Caco-2 (cell line): ENCODE measurements at regions of chr14 and their contacts with region 1.

Region 1: DNA sequence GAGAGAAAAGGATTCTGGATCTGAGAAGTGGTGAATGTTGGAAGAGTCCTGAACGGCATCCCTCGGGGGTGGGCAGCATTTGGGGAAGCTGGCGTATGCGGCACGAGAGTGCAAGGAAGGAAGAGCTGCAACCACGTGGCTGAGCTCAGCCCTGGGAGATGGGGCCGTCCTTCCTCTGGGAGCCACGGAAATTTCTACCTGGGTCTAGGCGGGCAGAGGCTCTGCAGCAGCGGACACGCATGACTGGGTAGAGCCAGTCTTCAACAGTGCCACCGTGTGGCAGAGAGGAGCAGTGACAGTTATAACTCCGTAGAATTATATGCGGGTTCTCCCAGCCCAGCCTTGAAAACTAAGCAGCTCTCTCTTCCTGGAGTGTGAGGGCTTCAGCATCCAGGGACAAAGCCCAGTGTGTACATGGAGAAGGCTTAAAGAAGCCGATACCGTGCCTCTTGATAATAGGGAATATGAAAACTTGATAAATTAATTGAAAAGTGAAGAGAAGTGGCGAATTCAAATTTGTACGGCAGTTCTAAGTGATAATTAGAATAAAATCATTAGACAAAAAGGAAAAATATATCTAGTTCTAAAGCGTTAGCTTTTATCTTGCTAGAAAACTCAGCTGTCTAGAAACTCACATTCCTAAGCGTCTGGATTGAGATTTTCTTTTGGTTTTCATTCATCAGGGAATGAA is 82.9 kb upstream of the STXBP6 start:
- DNase-seq: peak; percentile 81 to 84
- H3K4me3 ChIP-seq: peak overlapping the region; percentile 25; the same call in 1 of the 2 replicates
- H3K4me3 Mint-ChIP-seq: peak overlapping the region; percentile 72
- H3K27ac Mint-ChIP-seq: peak overlapping the region; percentile 31
- H3K4me1 ChIP-seq: no peaks in the 10 kb centered on the region
- H3K4me1 Mint-ChIP-seq: peaks cover 7% of the 10 kb centered on the region
- H3K27me3 ChIP-seq: no peaks in the 10 kb centered on the region
- H3K27me3 Mint-ChIP-seq: peaks cover 2% of the 10 kb centered on the region
- CTCF ChIP-seq: peak; percentile 80 to 85

Region 2: DNA sequence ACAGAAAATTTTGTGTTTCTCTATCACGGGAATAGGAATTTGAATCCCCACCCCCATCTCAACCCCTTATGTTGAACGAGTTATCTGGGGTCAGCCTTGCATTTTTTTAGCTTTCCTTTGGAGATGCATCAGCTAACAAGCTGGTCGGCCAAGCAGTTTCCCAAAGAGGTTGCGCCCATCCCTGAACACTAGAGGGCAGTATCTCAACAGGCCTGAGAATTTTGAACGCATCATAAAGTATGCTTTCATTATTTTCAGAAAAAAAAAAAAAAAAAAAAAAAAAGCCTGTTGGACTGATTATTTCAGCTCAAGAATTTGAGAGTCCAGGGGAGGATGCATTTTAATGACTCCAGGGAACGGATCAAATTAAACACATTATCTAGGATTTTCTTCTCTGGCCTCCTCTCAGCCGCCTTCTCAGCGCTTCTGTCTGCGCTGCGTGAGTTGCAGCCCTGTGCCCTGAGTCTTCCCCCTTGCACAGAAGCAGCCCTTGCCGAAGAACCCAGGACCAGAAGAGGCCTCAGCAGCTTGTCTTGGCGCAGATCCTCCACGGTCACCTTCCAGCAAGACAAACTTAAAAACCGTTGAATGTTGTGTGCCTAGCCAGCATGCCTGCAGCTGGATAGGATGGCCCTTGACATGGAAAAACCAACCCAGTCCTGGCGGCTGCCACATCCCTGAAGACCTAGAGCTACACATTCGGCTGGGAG is 422.3 kb before region 1 on chr14:
- CTCF ChIA-PET with region 1: interaction called, 10 read pairs
- POLR2A ChIA-PET with region 1: no interaction called
- intact Hi-C with region 1: loop called (anchors 1 kb)
- DNase-seq: peak; percentile 61 to 71
- H3K4me3 ChIP-seq: no peak overlapping the region
- H3K4me3 Mint-ChIP-seq: no peak overlapping the region
- H3K27ac Mint-ChIP-seq: no peak overlapping the region
- H3K4me1 ChIP-seq: no peaks in the 10 kb centered on the region
- H3K4me1 Mint-ChIP-seq: no peaks in the 10 kb centered on the region
- H3K27me3 ChIP-seq: no peaks in the 10 kb centered on the region
- H3K27me3 Mint-ChIP-seq: peaks cover 9% of the 10 kb centered on the region
- CTCF ChIP-seq: peak; percentile 80 to 91

Region 3: DNA sequence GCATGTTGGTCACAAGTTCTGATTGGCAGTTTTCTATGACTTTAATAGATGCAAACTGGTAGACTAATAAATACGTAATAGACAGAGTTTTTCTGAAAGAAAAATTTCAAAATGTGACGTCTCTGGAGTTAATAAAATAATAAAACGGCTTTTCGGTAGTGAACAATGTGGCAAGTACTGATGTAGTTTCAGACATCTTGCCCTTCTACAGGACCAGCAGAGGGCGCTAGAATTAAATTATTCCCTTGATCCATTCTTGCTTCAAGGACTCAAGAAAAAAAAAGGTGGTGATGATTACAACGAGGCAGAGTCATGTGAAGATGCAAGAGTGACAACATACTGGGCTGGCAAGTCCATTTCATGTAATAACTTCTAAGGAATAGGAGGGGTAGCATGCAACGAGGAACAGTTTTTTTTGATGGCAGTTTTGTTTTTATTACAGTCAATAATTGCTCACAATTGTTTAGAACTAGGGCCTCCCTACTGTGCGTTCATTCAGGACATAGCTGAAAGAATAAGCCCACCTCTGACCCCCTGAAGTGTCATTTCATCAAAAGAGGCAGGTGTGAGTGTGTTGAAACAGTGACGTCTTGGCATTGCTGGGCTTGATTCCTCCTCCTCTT is 397.9 kb before region 1 on chr14:
- CTCF ChIA-PET with region 1: interaction called, 3 read pairs
- POLR2A ChIA-PET with region 1: no interaction called
- intact Hi-C with region 1: loop called (anchors 1 kb)
- DNase-seq: peak; percentile 42 to 66
- H3K4me3 ChIP-seq: no peak overlapping the region
- H3K4me3 Mint-ChIP-seq: no peak overlapping the region
- H3K27ac Mint-ChIP-seq: no peak overlapping the region
- H3K4me1 ChIP-seq: no peaks in the 10 kb centered on the region
- H3K4me1 Mint-ChIP-seq: no peaks in the 10 kb centered on the region
- H3K27me3 ChIP-seq: no peaks in the 10 kb centered on the region
- H3K27me3 Mint-ChIP-seq: no peaks in the 10 kb centered on the region
- CTCF ChIP-seq: peak; percentile 69 to 70

Region 4: DNA sequence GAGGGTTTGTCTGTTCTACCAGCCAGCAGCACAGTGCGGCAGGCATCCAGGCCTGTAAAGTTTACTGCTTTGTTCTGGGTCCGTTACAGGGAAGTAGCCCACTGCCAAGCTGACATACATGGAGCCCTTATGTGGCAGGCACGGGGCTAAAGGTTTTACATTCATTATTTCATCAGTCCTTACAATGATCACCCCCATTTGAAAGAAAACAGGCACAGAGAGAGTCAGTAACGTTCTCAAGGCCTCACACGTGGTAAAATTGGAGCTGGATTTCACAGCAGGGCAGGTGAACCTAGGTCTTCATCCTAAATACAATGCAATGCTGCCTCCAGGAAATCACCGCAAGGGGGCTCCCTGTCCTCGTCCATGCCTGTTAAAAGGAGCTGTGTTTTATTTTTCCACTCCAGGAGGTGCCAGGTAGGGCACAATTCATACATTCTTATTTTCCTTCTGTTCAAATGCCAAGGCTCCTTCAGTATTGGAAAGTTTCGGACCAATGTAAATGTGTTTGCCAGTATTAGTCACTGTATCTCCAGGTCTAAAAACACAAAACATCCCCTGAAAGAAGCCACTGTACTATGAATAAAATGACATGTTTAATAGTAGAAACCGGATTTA is 326.7 kb before region 1 on chr14:
- CTCF ChIA-PET with region 1: interaction called, 12 read pairs
- POLR2A ChIA-PET with region 1: no interaction called
- intact Hi-C with region 1: loop called (anchors 1 kb)
- DNase-seq: peak; percentile 73 to 82
- H3K4me3 ChIP-seq: no peak overlapping the region
- H3K4me3 Mint-ChIP-seq: no peak overlapping the region
- H3K27ac Mint-ChIP-seq: peak overlapping the region; percentile 41
- H3K4me1 ChIP-seq: peaks cover 48% of the 10 kb centered on the region
- H3K4me1 Mint-ChIP-seq: peaks cover 22% of the 10 kb centered on the region
- H3K27me3 ChIP-seq: no peaks in the 10 kb centered on the region
- H3K27me3 Mint-ChIP-seq: no peaks in the 10 kb centered on the region
- CTCF ChIP-seq: peak; percentile 83 to 86

Region 5: GRCh38 chr14:25042362-25043299 is 90.2 kb before region 1 on chr14:
- CTCF ChIA-PET with region 1: interaction called, 3 read pairs
- POLR2A ChIA-PET with region 1: no interaction called
- intact Hi-C with region 1: loop called (anchors 2 kb)
- DNase-seq: peak; percentile 55 to 56
- H3K4me3 ChIP-seq: no peak overlapping the region
- H3K4me3 Mint-ChIP-seq: no peak overlapping the region
- H3K27ac Mint-ChIP-seq: peak overlapping the region; percentile 44
- H3K4me1 ChIP-seq: no peaks in the 10 kb centered on the region; the same call in 1 of the 2 replicates
- H3K4me1 Mint-ChIP-seq: peaks cover 22% of the 10 kb centered on the region
- H3K27me3 ChIP-seq: no peaks in the 10 kb centered on the region
- H3K27me3 Mint-ChIP-seq: no peaks in the 10 kb centered on the region
- CTCF ChIP-seq: peak; percentile 54 to 79

Region 6: DNA sequence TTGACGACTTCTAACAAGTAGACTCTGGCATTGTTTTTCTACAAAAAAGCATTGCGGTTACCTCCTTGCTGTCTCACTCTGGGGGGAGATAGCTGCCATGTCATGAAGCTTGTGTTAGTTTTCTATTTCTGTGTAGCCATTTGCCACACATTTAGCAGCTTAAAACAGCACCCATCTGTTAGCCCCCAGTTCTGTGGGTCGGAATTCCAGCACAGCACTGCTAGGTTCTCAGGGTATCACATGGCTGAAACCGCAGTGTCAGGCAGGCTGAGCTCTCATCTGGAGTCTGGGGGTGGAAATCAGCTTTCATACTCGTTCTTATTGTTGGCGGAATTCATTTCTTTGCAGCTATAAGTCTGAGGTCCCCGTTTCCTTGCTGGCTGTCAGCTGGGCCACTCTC is 63.0 kb before region 1 on chr14:
- CTCF ChIA-PET with region 1: no interaction called
- POLR2A ChIA-PET with region 1: no interaction called
- intact Hi-C with region 1: loop called (anchors 1 kb)
- DNase-seq: no peak
- H3K4me3 ChIP-seq: no peak overlapping the region
- H3K4me3 Mint-ChIP-seq: no peak overlapping the region
- H3K27ac Mint-ChIP-seq: no peak overlapping the region
- H3K4me1 ChIP-seq: no peaks in the 10 kb centered on the region
- H3K4me1 Mint-ChIP-seq: no peaks in the 10 kb centered on the region
- H3K27me3 ChIP-seq: no peaks in the 10 kb centered on the region
- H3K27me3 Mint-ChIP-seq: no peaks in the 10 kb centered on the region
- CTCF ChIP-seq: no peak

Region 7: DNA sequence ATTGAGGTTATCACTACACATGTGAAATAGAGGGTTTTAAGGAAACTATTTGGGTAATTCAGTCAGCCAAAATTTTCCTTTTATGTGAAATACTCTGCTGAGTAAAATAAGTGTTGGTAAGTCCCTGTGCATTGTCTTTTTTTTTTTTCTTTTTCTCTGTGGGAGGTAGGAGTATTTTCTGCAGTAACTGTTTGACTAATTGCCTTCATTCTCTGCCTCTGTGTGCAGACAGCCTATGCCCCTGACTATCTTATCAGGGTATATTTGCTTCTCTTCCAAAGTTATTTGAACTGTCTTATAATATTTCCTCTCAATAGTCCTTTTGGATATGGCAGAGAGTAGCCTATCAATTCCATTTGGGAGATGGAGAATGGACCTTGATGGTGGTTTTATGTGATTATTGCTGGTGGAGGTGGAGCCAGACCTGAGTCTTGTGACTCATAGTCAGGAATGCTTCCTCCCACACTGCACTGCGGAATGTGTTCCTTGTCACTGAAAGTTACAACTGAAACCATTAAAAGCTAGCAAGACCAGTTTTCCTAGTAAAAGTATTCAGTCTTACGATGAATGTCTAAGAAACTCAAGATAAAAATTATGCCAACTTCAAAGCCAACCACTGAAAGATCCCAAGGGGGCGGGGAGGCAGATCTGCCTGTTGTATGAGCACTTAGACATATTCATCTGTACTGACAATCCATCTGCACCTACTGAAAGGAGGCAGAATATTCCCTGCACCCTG is 42.0 kb before region 1 on chr14:
- CTCF ChIA-PET with region 1: no interaction called
- POLR2A ChIA-PET with region 1: no interaction called
- intact Hi-C with region 1: loop called (anchors 2 kb)
- DNase-seq: peak; percentile 79 to 88
- H3K4me3 ChIP-seq: peak overlapping the region; percentile 16; the same call in 1 of the 2 replicates
- H3K4me3 Mint-ChIP-seq: peak overlapping the region; percentile 58
- H3K27ac Mint-ChIP-seq: peak overlapping the region; percentile 89
- H3K4me1 ChIP-seq: peaks cover 57% of the 10 kb centered on the region
- H3K4me1 Mint-ChIP-seq: peaks cover 51% of the 10 kb centered on the region
- H3K27me3 ChIP-seq: no peaks in the 10 kb centered on the region
- H3K27me3 Mint-ChIP-seq: no peaks in the 10 kb centered on the region
- CTCF ChIP-seq: no peak

Region 8: DNA sequence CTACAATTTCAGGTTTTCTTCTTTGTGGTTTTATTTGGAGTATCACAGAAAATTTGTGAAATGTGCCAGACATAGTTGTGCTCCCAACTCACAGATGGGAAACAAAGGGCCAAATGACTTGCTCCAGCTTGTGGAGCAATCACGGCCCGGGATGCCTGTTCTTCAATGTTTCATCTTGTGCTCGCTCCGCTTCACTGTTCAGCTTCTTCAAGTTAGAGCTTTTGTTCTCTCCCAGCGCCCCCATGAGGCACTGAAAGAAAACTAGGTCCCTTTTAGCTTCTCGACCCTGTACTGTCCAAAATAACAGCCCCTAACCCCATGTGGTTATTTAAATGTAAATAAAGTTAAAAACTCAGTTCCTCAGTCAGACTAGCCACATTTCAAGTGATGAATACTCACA is 105.0 kb after region 1 on chr14:
- CTCF ChIA-PET with region 1: no interaction called
- POLR2A ChIA-PET with region 1: no interaction called
- intact Hi-C with region 1: no loop called
- DNase-seq: peak; percentile 29 to 36
- H3K4me3 ChIP-seq: no peak overlapping the region
- H3K4me3 Mint-ChIP-seq: no peak overlapping the region
- H3K27ac Mint-ChIP-seq: no peak overlapping the region
- H3K4me1 ChIP-seq: no peaks in the 10 kb centered on the region
- H3K4me1 Mint-ChIP-seq: no peaks in the 10 kb centered on the region
- H3K27me3 ChIP-seq: no peaks in the 10 kb centered on the region
- H3K27me3 Mint-ChIP-seq: peaks cover 14% of the 10 kb centered on the region
- CTCF ChIP-seq: peak in 1 of 2 experiments; percentile 40